IMR-90 (cell line): ENCODE measurements at regions of chr3 and their contacts with region 1.

Region 1: GRCh38 chr3:108662130-108662738 is 72.7 kb downstream of the DZIP3 start:
- DNase-seq: peak; percentile 83
- ATAC-seq: peak; percentile 88
- H3K4me3 ChIP-seq: no peak overlapping the region
- H3K27ac ChIP-seq: no peak overlapping the region
- H3K4me1 ChIP-seq: no peaks in the 10 kb centered on the region
- H3K27me3 ChIP-seq: no peaks in the 10 kb centered on the region
- CTCF ChIP-seq: peak; percentile 85
- POLR2A ChIP-seq: no peak
- RAD21 ChIP-seq: peak; percentile 79

Region 2: GRCh38 chr3:108879916-108880315 is 217.7 kb after region 1 on chr3:
- CTCF ChIA-PET with region 1: no interaction called
- POLR2A ChIA-PET with region 1: no interaction called
- dilution Hi-C with region 1: no loop called
- in situ Hi-C with region 1: no loop called
- intact Hi-C with region 1: no loop called
- DNase-seq: no peak
- ATAC-seq: no peak
- H3K4me3 ChIP-seq: no peak overlapping the region
- H3K27ac ChIP-seq: no peak overlapping the region
- H3K4me1 ChIP-seq: no peaks in the 10 kb centered on the region
- H3K27me3 ChIP-seq: no peaks in the 10 kb centered on the region
- CTCF ChIP-seq: no peak
- POLR2A ChIP-seq: no peak
- RAD21 ChIP-seq: no peak

Region 3: DNA sequence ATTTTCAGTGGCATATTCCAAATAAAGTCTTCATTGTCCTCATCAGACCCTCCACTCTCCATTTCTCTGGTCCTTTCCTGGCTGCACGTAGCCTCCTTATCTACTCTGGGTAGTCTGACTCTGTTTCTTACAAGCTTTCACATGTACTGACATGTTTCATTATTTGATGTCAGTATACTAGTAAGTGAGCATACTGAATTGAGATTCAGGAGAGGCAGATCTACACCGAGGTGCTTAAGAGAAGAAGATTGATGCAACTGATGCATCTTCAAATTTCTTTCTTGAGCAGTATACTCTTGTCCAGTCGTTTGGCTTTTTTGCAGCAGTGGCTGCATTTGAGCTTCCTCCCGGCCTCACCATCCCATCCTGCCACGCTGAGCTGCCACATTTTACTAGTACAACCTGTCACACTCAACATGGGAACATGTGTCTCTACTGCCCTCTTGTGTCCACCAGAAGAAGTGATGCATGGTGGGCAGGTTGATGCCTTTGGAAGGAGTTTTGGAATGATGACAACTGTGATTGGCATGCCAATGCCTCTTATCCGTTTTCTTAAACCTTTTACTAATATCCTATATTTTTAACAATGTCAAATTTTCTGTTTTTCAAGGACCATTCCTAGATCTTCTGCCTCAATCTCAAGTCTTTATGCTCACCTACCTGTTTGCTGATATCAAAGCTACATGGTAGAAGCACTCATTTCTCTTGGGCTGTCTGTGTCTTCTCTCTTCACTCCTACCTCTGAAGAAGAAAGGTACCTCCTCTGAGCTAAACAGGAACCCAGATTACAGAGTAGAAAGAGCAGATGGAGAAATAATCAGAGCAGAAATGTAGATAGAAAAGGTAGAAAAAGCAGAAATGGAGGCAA is 252.8 kb after region 1 on chr3:
- CTCF ChIA-PET with region 1: interaction called, 13 read pairs
- POLR2A ChIA-PET with region 1: no interaction called
- dilution Hi-C with region 1: no loop called
- in situ Hi-C with region 1: loop called (anchors 5 kb)
- intact Hi-C with region 1: loop called (anchors 1 kb)
- DNase-seq: peak; percentile 63
- ATAC-seq: peak; percentile 85
- H3K4me3 ChIP-seq: no peak overlapping the region
- H3K27ac ChIP-seq: no peak overlapping the region
- H3K4me1 ChIP-seq: no peaks in the 10 kb centered on the region
- H3K27me3 ChIP-seq: no peaks in the 10 kb centered on the region
- CTCF ChIP-seq: peak; percentile 80
- POLR2A ChIP-seq: no peak
- RAD21 ChIP-seq: peak; percentile 78

Region 4: DNA sequence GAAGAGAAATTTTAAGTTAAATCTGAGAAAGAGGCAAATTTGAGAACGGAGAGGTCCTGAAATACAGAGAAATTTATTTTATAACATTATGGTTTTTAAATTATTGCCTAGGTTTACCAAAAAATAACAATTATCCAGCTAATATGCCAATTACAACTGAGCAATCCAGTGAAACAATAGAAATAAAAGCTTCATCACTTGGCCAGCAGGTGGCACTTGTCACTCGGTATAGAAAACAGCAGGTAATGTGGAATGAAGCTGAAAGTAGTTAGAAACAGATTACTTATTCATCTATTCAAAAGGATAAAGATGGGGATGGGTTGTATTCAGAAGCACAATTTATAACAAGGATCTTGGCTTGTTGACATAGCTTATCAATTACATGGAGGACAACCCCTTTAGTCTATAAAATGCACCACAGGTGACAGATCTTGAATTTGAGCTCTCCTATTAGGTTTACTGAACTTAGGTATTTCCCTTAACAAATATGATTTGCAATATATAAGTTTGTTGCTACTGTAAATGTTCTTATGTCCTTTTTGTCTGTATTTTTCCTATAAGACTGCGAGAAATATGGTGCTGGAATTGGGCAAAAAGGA is 361.5 kb after region 1 on chr3:
- CTCF ChIA-PET with region 1: no interaction called
- POLR2A ChIA-PET with region 1: no interaction called
- dilution Hi-C with region 1: no loop called
- in situ Hi-C with region 1: no loop called
- intact Hi-C with region 1: loop called (anchors 2 kb)
- DNase-seq: peak; percentile 47
- ATAC-seq: peak; percentile 63; the same call in 1 of the 2 replicates
- H3K4me3 ChIP-seq: no peak overlapping the region
- H3K27ac ChIP-seq: no peak overlapping the region
- H3K4me1 ChIP-seq: no peaks in the 10 kb centered on the region
- H3K27me3 ChIP-seq: no peaks in the 10 kb centered on the region
- CTCF ChIP-seq: peak; percentile 62
- POLR2A ChIP-seq: no peak
- RAD21 ChIP-seq: peak; percentile 49

Region 5: DNA sequence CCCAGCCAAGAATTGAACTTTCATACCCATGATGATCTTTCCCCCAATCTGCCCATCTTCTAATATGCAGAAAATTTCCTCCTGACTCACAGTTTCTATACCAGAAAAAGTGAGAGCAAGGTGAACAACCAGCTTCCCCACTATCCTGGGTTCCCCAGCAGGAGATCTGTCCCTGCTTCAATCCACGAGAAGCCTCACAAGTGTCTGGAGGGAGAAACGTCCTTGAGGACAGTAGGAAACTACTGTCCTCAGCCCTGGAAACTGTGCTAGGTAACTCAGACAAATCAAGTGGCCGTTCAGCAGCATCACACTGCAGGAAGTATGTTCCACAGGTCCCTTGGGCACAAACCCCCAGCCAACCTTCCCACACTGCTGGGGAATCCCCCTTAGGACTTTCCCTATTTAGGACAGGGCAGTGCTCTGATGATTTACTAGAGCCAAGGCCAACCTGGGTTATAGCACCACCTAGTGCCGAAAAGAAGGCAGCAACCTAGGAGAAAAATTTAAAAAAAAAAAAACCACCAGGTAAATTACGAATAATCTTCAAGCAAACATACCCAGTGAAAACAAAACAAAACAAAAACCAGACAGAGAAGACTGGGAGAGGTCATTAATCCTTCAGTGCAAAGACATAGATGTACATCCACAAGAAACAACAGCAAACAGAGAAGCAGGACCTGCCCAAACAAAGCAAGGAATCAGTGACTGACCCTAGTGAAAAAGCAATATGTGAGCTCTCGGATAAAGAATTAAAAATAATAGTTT is 419.7 kb after region 1 on chr3:
- CTCF ChIA-PET with region 1: no interaction called
- POLR2A ChIA-PET with region 1: interaction called, 5 read pairs
- dilution Hi-C with region 1: no loop called
- in situ Hi-C with region 1: no loop called
- intact Hi-C with region 1: loop called (anchors 1 kb)
- DNase-seq: peak; percentile 54
- ATAC-seq: peak; percentile 75
- H3K4me3 ChIP-seq: no peak overlapping the region
- H3K27ac ChIP-seq: no peak overlapping the region
- H3K4me1 ChIP-seq: no peaks in the 10 kb centered on the region
- H3K27me3 ChIP-seq: no peaks in the 10 kb centered on the region
- CTCF ChIP-seq: peak; percentile 77
- POLR2A ChIP-seq: no peak
- RAD21 ChIP-seq: peak; percentile 71